ENCODE measurements at regions of chr16 and their contacts with region 1.

Region 1: GRCh38 chr16:85086347-85087291 is 25.7 kb downstream of the CIBAR2 start:
- DNase-seq: peak; percentile 64 to 85 (median 77)
- ATAC-seq: peak; percentile 78
- H3K4me3 ChIP-seq: no peak overlapping the region
- H3K4me3 Mint-ChIP-seq: peak overlapping the region; percentile 58
- H3K27ac ChIP-seq: no peak overlapping the region
- H3K27ac Mint-ChIP-seq: peak overlapping the region; percentile 73
- H3K4me1 ChIP-seq: peaks cover 15% of the 10 kb centered on the region
- H3K4me1 Mint-ChIP-seq: peaks cover 41% of the 10 kb centered on the region
- H3K27me3 ChIP-seq: no peaks in the 10 kb centered on the region
- H3K27me3 Mint-ChIP-seq: no peaks in the 10 kb centered on the region
- CTCF ChIP-seq: peak; percentile 73

Region 2: DNA sequence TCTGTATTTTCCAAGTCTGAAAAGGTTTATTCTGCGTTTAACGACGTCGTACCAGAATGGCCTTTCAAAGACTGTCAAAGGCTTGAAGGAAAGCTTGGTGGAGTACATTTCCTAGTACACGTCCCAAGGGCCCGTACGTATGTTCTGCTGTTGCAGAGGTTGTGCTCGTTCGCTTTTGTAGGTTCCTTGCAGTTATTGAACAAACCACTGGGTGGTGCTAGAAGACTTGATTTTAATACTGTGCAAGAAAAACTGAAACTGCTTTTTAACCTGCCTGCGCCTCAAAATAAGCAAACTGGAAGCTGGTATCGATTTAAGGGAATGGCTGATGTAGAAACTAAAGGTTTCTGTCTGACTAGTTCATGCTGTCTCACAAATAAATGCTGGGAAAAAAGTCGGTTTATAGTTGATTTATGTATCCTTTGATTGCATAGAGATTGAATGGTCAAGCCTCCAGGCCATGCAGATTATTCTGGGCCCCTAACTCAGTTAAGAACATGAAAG is 332.2 kb before region 1 on chr16:
- CTCF ChIA-PET with region 1: interaction called, 3 read pairs
- POLR2A ChIA-PET with region 1: no interaction called
- intact Hi-C with region 1: loop called in 1 of 2 experiments (anchors 10 kb)
- DNase-seq: peak; percentile 42 to 87 (median 63)
- ATAC-seq: peak; percentile 72
- H3K4me3 ChIP-seq: no peak overlapping the region
- H3K4me3 Mint-ChIP-seq: peak overlapping the region; percentile 53
- H3K27ac ChIP-seq: peak overlapping the region in 1 of 2 experiments; percentile 2
- H3K27ac Mint-ChIP-seq: peak overlapping the region; percentile 45
- H3K4me1 ChIP-seq: peaks cover 45% of the 10 kb centered on the region
- H3K4me1 Mint-ChIP-seq: peaks cover 81% of the 10 kb centered on the region
- H3K27me3 ChIP-seq: no peaks in the 10 kb centered on the region
- H3K27me3 Mint-ChIP-seq: no peaks in the 10 kb centered on the region
- CTCF ChIP-seq: peak; percentile 93

Region 3: DNA sequence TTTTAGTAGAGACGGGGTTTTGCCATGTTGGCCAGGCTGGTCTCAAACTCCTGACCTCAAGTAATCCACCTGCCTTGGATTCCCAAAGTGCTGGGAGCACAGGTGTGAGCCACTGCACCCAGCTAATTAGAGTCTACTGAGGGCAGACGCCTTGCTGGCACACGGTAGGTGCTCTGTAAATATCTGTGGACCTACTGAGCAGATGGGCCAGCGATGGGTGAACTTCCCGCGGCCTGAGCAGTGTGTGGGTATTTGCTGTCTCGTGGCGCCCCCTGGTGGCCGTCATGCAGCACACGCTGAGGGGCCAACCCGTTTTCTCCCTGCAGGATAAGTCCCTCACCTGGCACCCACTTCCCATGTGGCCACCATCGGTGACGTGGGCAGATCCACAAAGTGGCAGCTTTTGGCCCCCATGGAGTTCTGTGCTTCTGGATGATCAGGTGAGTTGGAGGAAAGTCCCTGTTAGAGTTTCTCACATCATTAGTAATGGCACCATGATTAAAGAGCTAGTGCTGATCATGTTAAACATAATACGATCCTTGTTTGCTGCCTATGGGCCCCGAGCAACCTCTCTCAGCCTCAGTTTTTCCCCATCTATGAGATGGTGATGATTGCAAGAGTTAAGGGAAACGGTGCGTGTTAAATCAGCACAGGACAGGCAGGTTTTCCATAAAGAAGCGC is 116.0 kb before region 1 on chr16:
- CTCF ChIA-PET with region 1: interaction called, 20 read pairs
- POLR2A ChIA-PET with region 1: no interaction called
- intact Hi-C with region 1: no loop called
- DNase-seq: peak; percentile 59 to 87 (median 75)
- ATAC-seq: peak; percentile 87
- H3K4me3 ChIP-seq: no peak overlapping the region
- H3K4me3 Mint-ChIP-seq: no peak overlapping the region
- H3K27ac ChIP-seq: no peak overlapping the region
- H3K27ac Mint-ChIP-seq: no peak overlapping the region
- H3K4me1 ChIP-seq: peaks cover 3% of the 10 kb centered on the region
- H3K4me1 Mint-ChIP-seq: peaks cover 4% of the 10 kb centered on the region
- H3K27me3 ChIP-seq: no peaks in the 10 kb centered on the region
- H3K27me3 Mint-ChIP-seq: peaks cover 3% of the 10 kb centered on the region
- CTCF ChIP-seq: peak; percentile 93

Region 4: DNA sequence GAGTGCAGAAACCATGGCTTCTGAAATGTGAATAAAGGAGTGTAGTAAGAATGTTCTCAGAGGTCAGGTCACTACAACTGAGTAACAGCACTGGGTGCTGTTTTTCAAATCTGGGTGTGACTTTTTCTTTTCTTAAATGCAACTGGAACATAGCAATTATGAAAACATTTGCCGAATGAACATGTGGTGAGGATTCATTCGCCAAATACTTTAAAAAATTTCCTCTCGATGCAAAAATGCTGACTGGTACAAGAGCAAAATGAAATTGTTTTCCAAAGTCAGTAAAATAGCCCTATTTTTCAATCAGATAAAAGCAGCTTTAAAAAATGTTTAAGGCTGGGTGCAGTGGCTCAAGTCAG is 93.9 kb before region 1 on chr16:
- CTCF ChIA-PET with region 1: no interaction called
- POLR2A ChIA-PET with region 1: no interaction called
- intact Hi-C with region 1: no loop called
- DNase-seq: no peak
- ATAC-seq: no peak
- H3K4me3 ChIP-seq: no peak overlapping the region
- H3K4me3 Mint-ChIP-seq: no peak overlapping the region
- H3K27ac ChIP-seq: no peak overlapping the region
- H3K27ac Mint-ChIP-seq: no peak overlapping the region
- H3K4me1 ChIP-seq: no peaks in the 10 kb centered on the region
- H3K4me1 Mint-ChIP-seq: peaks cover 11% of the 10 kb centered on the region
- H3K27me3 ChIP-seq: no peaks in the 10 kb centered on the region
- H3K27me3 Mint-ChIP-seq: no peaks in the 10 kb centered on the region
- CTCF ChIP-seq: no peak

Region 5: DNA sequence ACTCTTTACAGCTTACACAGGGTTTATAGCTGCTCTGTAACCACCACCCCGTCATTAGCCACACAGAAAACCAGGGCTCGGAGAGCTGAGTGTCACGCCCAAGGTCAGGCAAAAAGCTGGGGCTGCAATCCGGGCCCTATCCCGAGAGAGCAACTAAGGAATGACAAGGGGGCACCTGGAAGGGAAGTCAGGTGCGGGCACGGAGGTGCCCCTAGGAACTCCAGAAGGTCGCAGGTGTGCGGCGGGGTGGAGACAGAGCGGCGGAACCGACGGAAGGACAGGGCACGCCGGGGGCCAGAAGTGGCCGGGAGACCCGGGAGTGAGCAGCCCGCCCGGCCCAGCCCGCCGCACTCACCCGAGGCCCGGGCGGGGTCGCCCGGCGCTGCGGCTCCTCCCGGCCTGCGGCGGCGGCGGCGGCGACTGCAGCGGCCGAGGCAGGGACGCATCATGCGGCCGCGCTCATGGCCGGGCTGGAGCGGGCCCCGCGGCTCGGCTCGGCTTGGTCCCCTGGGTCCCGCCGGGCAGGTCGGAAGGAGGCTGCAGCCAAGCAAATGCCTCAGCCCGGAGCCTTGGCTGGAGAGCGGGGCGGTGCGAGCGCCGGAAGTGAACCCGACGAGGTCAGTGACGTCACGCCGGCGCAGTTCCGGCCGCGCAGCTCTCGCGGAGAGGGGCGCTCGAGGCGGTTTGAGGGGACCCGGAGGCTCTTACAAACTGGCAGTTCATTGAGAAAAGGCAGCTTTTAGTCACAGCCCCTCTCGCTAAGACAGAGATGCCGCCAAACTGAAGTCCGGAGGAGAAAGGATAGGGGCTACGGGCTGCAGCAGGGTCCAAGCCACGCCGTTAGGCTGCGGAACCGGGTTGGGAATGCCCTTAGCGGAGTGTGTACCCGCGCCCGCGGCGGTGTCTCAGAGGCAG is 75.4 kb before region 1 on chr16 and contains the start of gene ZDHHC7:
- CTCF ChIA-PET with region 1: interaction called, 32 read pairs
- POLR2A ChIA-PET with region 1: interaction called, 11 read pairs
- intact Hi-C with region 1: loop called (anchors 1 kb)
- DNase-seq: peak; percentile 75 to 94 (median 88)
- ATAC-seq: peak; percentile 88
- H3K4me3 ChIP-seq: peak within 1 kb of the TSS; percentile 69 to 99
- H3K4me3 Mint-ChIP-seq: peak within 1 kb of the TSS; percentile 99
- H3K27ac ChIP-seq: peak within 1 kb of the TSS; percentile 94 to 100
- H3K27ac Mint-ChIP-seq: peak within 1 kb of the TSS; percentile 99
- H3K4me1 ChIP-seq: peaks cover 32% of the 10 kb centered on the region
- H3K4me1 Mint-ChIP-seq: peaks cover 48% of the 10 kb centered on the region
- H3K27me3 ChIP-seq: no peaks in the 10 kb centered on the region
- H3K27me3 Mint-ChIP-seq: peaks cover 2% of the 10 kb centered on the region
- CTCF ChIP-seq: no peak
- total RNA-seq, gene ZDHHC7: 85.4 to 92.1 TPM

Region 6: DNA sequence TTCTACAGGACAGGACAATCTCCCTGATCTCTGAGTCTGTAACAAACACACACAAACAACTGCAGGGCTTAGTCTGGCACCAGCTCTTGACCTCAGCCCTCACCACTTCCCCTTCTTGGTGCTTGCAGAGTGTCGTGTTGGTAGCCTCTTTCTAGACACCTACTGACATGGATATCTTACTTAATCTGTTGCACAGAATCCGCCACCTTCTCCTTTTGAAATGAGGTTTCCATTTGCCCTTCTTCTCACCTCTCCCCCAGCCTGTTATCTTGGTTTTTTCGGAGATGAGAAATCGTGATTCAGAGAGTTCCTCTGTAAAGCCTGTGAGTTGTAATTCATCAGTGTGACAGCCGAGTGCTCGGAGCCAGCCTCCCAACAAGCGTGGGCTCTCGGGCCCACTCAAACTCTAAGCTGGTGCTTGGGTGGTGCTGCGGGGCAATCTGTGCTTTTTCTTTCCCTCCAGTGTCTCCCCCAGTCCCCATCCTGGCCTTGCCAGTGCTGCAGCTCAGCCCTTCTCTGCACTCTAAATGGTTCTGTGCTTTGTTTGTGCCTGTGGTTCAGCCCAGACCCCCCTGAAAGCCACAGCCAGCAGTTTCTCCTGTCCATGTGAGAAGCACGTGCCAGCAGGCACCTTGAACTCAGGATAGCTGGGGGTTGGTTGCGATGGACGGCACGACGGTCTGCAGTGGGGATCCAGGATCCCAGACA is 31.0 kb before region 1 on chr16:
- CTCF ChIA-PET with region 1: interaction called, 13 read pairs
- POLR2A ChIA-PET with region 1: interaction called, 8 read pairs
- intact Hi-C with region 1: loop called in 1 of 2 experiments (anchors 1 kb)
- DNase-seq: peak; percentile 47 to 96 (median 77)
- ATAC-seq: peak; percentile 88
- H3K4me3 ChIP-seq: peak overlapping the region; percentile 30 to 33
- H3K4me3 Mint-ChIP-seq: peak overlapping the region; percentile 69
- H3K27ac ChIP-seq: peak overlapping the region; percentile 52 to 82
- H3K27ac Mint-ChIP-seq: peak overlapping the region; percentile 94
- H3K4me1 ChIP-seq: peaks cover 42% of the 10 kb centered on the region
- H3K4me1 Mint-ChIP-seq: peaks cover 67% of the 10 kb centered on the region
- H3K27me3 ChIP-seq: peaks cover 0 to 2% of the 10 kb centered on the region in 2 experiments
- H3K27me3 Mint-ChIP-seq: no peaks in the 10 kb centered on the region
- CTCF ChIP-seq: no peak

Region 7: DNA sequence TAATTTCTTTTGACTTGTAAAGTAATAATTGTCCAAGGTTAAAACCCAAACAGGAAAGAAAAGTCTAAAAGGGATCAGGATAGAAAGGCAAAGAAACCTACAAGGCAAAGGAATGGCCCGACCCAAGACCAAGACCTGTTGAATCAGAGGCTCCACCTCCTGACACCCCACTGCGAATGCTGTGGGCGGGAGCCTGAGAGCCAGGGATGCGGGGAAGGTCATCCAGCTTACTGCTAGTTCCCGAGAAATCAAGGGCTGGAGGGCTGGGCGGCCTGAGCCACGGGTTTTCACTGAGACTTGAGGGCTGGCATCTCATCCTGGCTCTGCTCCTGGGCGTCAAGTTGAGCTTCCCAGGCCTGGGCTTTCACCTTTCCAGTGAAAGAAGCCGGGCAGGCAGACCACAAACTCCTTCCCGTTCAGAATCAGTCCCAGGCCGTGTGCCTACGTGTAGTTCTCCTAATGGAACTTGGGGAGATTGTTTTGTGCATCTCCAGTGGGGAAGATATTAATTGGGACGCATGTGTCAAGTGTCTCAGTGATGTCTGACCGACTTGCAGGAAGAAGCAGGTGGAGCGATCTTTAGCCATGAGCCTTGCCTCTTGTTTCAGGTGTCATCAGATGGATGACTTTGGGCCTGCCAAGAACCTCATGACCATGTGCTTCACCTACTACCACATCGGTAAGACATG is 11.2 kb before region 1 on chr16:
- CTCF ChIA-PET with region 1: interaction called, 11 read pairs
- POLR2A ChIA-PET with region 1: interaction called, 4 read pairs
- intact Hi-C with region 1: no loop called
- DNase-seq: no peak
- ATAC-seq: no peak
- H3K4me3 ChIP-seq: no peak overlapping the region
- H3K4me3 Mint-ChIP-seq: no peak overlapping the region
- H3K27ac ChIP-seq: no peak overlapping the region
- H3K27ac Mint-ChIP-seq: no peak overlapping the region
- H3K4me1 ChIP-seq: no peaks in the 10 kb centered on the region
- H3K4me1 Mint-ChIP-seq: no peaks in the 10 kb centered on the region
- H3K27me3 ChIP-seq: no peaks in the 10 kb centered on the region
- H3K27me3 Mint-ChIP-seq: no peaks in the 10 kb centered on the region
- CTCF ChIP-seq: no peak

Measured in CD8-positive, alpha-beta T cell (primary cell).